ENCODE measurements at regions of chr2 and their contacts with region 1.

Region 1: GRCh38 chr2:63436488-63436887 is 151.8 kb downstream of the WDPCP start:
- DNase-seq: no peak
- ATAC-seq: no peak
- H3K4me3 Mint-ChIP-seq: no peak overlapping the region
- H3K27ac Mint-ChIP-seq: no peak overlapping the region
- H3K4me1 Mint-ChIP-seq: peaks cover 4% of the 10 kb centered on the region
- H3K27me3 Mint-ChIP-seq: no peaks in the 10 kb centered on the region
- CTCF ChIP-seq: no peak

Region 2: GRCh38 chr2:62904344-62904743 is 532.1 kb before region 1 on chr2:
- CTCF ChIA-PET with region 1: no interaction called
- POLR2A ChIA-PET with region 1: no interaction called
- intact Hi-C with region 1: no loop called
- DNase-seq: no peak
- ATAC-seq: no peak
- H3K4me3 Mint-ChIP-seq: no peak overlapping the region
- H3K27ac Mint-ChIP-seq: no peak overlapping the region
- H3K4me1 Mint-ChIP-seq: no peaks in the 10 kb centered on the region
- H3K27me3 Mint-ChIP-seq: no peaks in the 10 kb centered on the region
- CTCF ChIP-seq: no peak

Region 3: GRCh38 chr2:63424329-63425078 is 12.0 kb before region 1 on chr2:
- CTCF ChIA-PET with region 1: interaction called, 15 read pairs
- POLR2A ChIA-PET with region 1: no interaction called
- intact Hi-C with region 1: no loop called
- DNase-seq: peak; percentile 11
- ATAC-seq: peak; percentile 87
- H3K4me3 Mint-ChIP-seq: no peak overlapping the region
- H3K27ac Mint-ChIP-seq: no peak overlapping the region
- H3K4me1 Mint-ChIP-seq: peaks cover 4% of the 10 kb centered on the region
- H3K27me3 Mint-ChIP-seq: no peaks in the 10 kb centered on the region
- CTCF ChIP-seq: peak; percentile 72

Region 4: GRCh38 chr2:63488118-63488713 is 51.7 kb after region 1 on chr2:
- CTCF ChIA-PET with region 1: no interaction called
- POLR2A ChIA-PET with region 1: no interaction called
- intact Hi-C with region 1: no loop called
- DNase-seq: peak; percentile 47
- ATAC-seq: no peak
- H3K4me3 Mint-ChIP-seq: no peak overlapping the region
- H3K27ac Mint-ChIP-seq: no peak overlapping the region
- H3K4me1 Mint-ChIP-seq: peaks cover 3% of the 10 kb centered on the region
- H3K27me3 Mint-ChIP-seq: no peaks in the 10 kb centered on the region
- CTCF ChIP-seq: peak; percentile 51

Region 5: DNA sequence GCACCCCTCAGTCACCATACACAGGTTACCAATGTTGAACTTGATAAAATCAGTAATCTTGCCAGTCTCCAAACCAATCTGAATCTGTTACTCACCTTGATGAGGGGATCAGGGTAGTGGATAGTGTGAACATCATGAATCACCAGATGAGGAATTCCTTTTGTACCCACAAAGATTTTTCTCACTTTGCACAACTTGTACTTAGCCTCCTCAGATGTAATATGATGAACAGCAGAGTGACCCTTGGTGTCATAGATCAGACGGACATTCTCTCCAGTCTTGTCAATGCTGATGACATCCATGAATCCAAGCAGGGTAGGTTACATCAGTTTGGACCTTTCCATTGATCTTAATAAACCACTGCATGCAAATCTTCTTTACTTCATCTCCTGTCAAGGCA is 207.0 kb after region 1 on chr2:
- CTCF ChIA-PET with region 1: no interaction called
- POLR2A ChIA-PET with region 1: no interaction called
- intact Hi-C with region 1: no loop called
- DNase-seq: no peak
- ATAC-seq: no peak
- H3K4me3 Mint-ChIP-seq: no peak overlapping the region
- H3K27ac Mint-ChIP-seq: no peak overlapping the region
- H3K4me1 Mint-ChIP-seq: no peaks in the 10 kb centered on the region
- H3K27me3 Mint-ChIP-seq: peaks cover 13% of the 10 kb centered on the region
- CTCF ChIP-seq: no peak

Measured in activated CD8-positive, alpha-beta T cell treated with anti-CD3 and anti-CD28 coated beads for 36 hours (primary cell).